ENCODE measurements at regions of chr3 and their contacts with region 1.

Region 1: GRCh38 chr3:111539351-111540331 is 2.4 kb upstream of the CD96 start:
- ATAC-seq: peak; percentile 64 to 100 (median 96)
- H3K4me3 ChIP-seq: no peak overlapping the region
- H3K27ac ChIP-seq: no peak overlapping the region
- H3K4me1 ChIP-seq: no peaks in the 10 kb centered on the region

Region 2: GRCh38 chr3:111080413-111080812 is 459.2 kb before region 1 on chr3:
- in situ Hi-C with region 1: loop called in 1 of 9 experiments (anchors 25 kb)
- ATAC-seq: peak in 3 of 8 experiments; percentile 37 to 58 (median 56)
- H3K4me3 ChIP-seq: no peak overlapping the region
- H3K27ac ChIP-seq: no peak overlapping the region
- H3K4me1 ChIP-seq: peaks cover 7% of the 10 kb centered on the region in 2 donors

Region 3: GRCh38 chr3:111112913-111113312 is 426.7 kb before region 1 on chr3:
- in situ Hi-C with region 1: no loop called
- ATAC-seq: peak in 1 of 8 experiments; percentile 23
- H3K4me3 ChIP-seq: no peak overlapping the region
- H3K27ac ChIP-seq: no peak overlapping the region
- H3K4me1 ChIP-seq: no peaks in the 10 kb centered on the region

Region 4: DNA sequence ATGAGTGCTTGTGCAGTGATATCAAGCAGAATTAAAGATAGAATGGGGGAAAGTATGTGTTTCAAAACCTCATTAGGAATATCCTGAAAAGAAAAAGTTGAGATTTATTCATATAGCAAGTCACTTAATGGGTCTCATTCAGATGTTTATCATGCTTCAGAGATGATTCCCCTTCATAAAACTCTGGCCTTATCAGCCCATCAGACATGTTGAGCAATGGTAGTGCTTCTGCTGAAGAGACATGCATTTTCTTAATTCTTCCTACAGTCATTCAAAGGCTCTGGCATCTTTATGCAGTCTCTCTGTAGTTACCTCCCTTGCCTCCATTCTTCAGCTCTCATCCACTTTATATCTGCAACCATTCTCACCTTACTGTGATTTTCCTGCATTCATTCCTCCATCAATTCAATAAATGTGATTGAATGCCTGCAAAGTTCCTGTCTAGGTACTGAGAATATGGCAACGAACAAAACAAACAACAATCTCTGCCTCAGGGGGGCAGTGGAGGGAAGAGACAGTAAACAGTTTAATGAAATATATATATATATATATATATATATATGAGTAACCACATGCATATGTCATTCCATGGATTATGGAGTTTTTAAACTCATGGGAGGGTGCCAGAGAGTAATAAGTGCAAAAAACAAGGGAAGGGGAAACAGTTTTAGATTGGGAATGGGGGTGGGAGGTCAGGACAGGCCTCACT is 329.5 kb before region 1 on chr3:
- in situ Hi-C with region 1: loop called in 1 of 9 experiments (anchors 25 kb)
- ATAC-seq: peak in 3 of 8 experiments; percentile 58 to 71 (median 60)
- H3K4me3 ChIP-seq: no peak overlapping the region
- H3K27ac ChIP-seq: no peak overlapping the region
- H3K4me1 ChIP-seq: no peaks in the 10 kb centered on the region

Region 5: DNA sequence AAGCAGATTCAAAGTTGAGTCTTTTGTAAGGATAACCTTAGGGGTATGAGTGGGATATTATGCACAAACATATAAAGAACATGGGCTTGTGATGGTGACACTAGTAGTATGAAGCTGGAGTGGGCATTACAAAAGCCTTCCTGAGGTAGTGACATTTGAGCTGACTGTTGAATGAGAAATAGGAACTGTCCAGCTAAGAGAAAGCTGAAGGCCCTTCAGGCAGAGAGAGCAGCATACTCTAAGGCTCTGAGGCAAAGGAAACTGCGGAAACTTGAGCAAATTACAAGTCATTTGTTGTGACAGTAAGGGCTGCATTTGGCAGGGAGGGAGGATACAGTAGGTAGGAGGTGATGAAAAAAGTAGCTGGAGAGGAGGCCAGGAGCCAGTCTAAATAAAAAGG is 188.3 kb before region 1 on chr3:
- in situ Hi-C with region 1: loop called in 1 of 9 experiments (anchors 25 kb)
- ATAC-seq: peak in 2 of 8 experiments; percentile 57 to 66
- H3K4me3 ChIP-seq: no peak overlapping the region
- H3K27ac ChIP-seq: no peak overlapping the region
- H3K4me1 ChIP-seq: no peaks in the 10 kb centered on the region